B cell (primary cell): ENCODE measurements at regions of chr17 and their contacts with region 1.

Region 1: GRCh38 chr17:64320613-64321553 is 57.8 kb upstream of the TEX2 start:
- DNase-seq: peak; percentile 74
- ATAC-seq: peak; percentile 13
- H3K4me3 ChIP-seq: no peak overlapping the region
- H3K4me3 Mint-ChIP-seq: peak overlapping the region; percentile 56
- H3K27ac ChIP-seq: no peak overlapping the region
- H3K27ac Mint-ChIP-seq: peak overlapping the region; percentile 5
- H3K4me1 ChIP-seq: peaks cover 26 to 42% of the 10 kb centered on the region in 2 donors
- H3K4me1 Mint-ChIP-seq: peaks cover 54% of the 10 kb centered on the region
- H3K27me3 ChIP-seq: no peaks in the 10 kb centered on the region
- H3K27me3 Mint-ChIP-seq: peaks cover 3% of the 10 kb centered on the region
- CTCF ChIP-seq: peak; percentile 95

Region 2: GRCh38 chr17:64306850-64307463 is 13.9 kb before region 1 on chr17:
- CTCF ChIA-PET with region 1: interaction called, 38 read pairs
- POLR2A ChIA-PET with region 1: no interaction called
- intact Hi-C with region 1: no loop called
- DNase-seq: peak; percentile 83
- ATAC-seq: peak; percentile 57
- H3K4me3 ChIP-seq: no peak overlapping the region
- H3K4me3 Mint-ChIP-seq: no peak overlapping the region
- H3K27ac ChIP-seq: no peak overlapping the region
- H3K27ac Mint-ChIP-seq: no peak overlapping the region
- H3K4me1 ChIP-seq: no peaks in the 10 kb centered on the region
- H3K4me1 Mint-ChIP-seq: no peaks in the 10 kb centered on the region
- H3K27me3 ChIP-seq: no peaks in the 10 kb centered on the region
- H3K27me3 Mint-ChIP-seq: no peaks in the 10 kb centered on the region
- CTCF ChIP-seq: peak; percentile 95

Region 3: GRCh38 chr17:64339516-64340490 is 18.9 kb after region 1 on chr17:
- CTCF ChIA-PET with region 1: interaction called, 11 read pairs
- POLR2A ChIA-PET with region 1: no interaction called
- intact Hi-C with region 1: no loop called
- DNase-seq: no peak
- ATAC-seq: no peak
- H3K4me3 ChIP-seq: no peak overlapping the region
- H3K4me3 Mint-ChIP-seq: no peak overlapping the region
- H3K27ac ChIP-seq: no peak overlapping the region
- H3K27ac Mint-ChIP-seq: no peak overlapping the region
- H3K4me1 ChIP-seq: peaks cover 4 to 11% of the 10 kb centered on the region in 2 donors
- H3K4me1 Mint-ChIP-seq: peaks cover 12% of the 10 kb centered on the region
- H3K27me3 ChIP-seq: no peaks in the 10 kb centered on the region
- H3K27me3 Mint-ChIP-seq: no peaks in the 10 kb centered on the region
- CTCF ChIP-seq: no peak

Region 4: DNA sequence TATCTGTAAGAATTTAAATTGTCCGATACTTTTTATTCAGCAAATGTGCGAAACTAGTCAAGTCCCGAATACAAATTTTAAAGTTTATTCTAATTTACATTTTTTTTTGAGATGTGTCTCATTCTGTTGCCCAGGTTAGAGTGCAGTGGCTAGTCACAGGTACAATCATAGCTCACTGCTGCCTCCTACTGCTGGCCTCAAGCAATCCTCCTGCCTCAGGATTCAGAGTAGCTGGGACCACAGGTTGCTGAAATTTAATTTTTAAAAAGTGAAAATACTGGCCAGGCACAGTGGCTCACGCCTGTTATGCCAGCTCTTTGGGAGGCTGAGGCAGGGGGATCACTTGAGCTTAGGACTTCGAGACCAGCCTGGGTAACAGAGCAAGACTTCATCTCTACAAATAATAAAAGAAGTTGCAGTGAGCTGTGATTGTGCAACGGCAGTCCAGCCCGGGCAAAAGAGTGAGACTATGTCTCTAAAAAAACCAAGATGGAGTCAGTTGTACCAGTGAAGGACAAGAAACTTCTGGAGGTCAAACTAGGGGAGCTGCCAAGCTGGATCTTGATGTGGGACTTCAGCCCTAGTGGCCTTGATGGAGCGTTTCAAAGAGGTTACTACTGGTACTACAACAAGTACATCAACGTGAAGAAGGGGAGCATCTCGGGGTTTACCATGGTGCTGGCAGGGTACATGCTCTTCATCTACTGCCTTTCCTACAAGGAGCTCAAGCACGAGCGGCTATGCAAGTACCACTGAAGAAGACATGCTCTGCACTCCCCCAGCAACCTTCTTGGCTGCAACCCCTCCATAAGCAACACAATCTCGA is 170.4 kb after region 1 on chr17:
- CTCF ChIA-PET with region 1: interaction called, 12 read pairs
- POLR2A ChIA-PET with region 1: no interaction called
- intact Hi-C with region 1: loop called (anchors 5 kb)
- DNase-seq: peak; percentile 61
- ATAC-seq: peak; percentile 65
- H3K4me3 ChIP-seq: no peak overlapping the region
- H3K4me3 Mint-ChIP-seq: no peak overlapping the region
- H3K27ac ChIP-seq: no peak overlapping the region
- H3K27ac Mint-ChIP-seq: no peak overlapping the region
- H3K4me1 ChIP-seq: peaks cover 20 to 21% of the 10 kb centered on the region in 2 donors
- H3K4me1 Mint-ChIP-seq: peaks cover 24% of the 10 kb centered on the region
- H3K27me3 ChIP-seq: no peaks in the 10 kb centered on the region
- H3K27me3 Mint-ChIP-seq: no peaks in the 10 kb centered on the region
- CTCF ChIP-seq: peak; percentile 68